ENCODE measurements at regions of chr3 and their contacts with region 1.

Region 1: GRCh38 chr3:124351430-124352148 is 359.7 kb upstream of the ROPN1 start:
- DNase-seq: no peak
- ATAC-seq: peak; percentile 91
- H3K4me3 ChIP-seq: no peak overlapping the region
- H3K27ac ChIP-seq: no peak overlapping the region
- H3K4me1 ChIP-seq: peaks cover 4% of the 10 kb centered on the region
- H3K27me3 ChIP-seq: no peaks in the 10 kb centered on the region
- CTCF ChIP-seq: peak; percentile 59

Region 2: GRCh38 chr3:124559881-124560574 is 208.4 kb after region 1 on chr3:
- intact Hi-C with region 1: loop called (anchors 10 kb)
- DNase-seq: peak; percentile 67
- ATAC-seq: peak; percentile 85
- H3K4me3 ChIP-seq: no peak overlapping the region
- H3K27ac ChIP-seq: no peak overlapping the region
- H3K4me1 ChIP-seq: peaks cover 17% of the 10 kb centered on the region
- H3K27me3 ChIP-seq: no peaks in the 10 kb centered on the region
- CTCF ChIP-seq: peak; percentile 88